ENCODE measurements at regions of chr1 and their contacts with region 1.

Region 1: DNA sequence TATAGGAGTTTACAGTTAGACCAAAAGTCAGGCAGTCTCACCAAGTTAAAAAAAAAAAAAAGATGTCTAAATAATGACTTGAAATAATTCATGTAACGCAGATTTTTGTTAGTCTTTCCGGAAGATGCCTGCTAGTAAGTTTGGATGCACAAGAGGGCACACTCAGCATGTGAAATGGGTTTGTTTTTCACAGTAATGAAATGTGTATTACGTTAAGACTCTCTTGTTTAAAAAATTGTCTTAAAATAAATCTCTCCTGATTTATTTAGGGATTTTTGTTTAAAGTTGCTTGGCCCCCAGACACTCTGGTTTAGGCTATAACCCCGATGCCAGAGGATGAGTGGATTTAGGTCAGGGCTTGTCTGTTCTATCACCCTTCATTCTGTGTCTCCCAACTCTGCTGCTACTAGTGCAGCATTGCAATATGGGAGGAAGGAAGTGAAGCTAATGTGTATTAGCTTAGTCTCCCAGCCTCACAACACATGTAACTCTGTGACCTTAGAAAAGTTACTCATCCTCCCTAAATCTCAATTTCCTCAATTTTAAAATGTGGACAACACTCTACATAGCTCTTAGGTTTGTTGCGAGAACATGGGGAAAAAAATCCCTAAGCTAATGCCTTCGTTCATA is 25.7 kb downstream of the CTH start:
- DNase-seq: peak; percentile 17
- H3K4me3 ChIP-seq: no peak overlapping the region
- H3K27me3 ChIP-seq: no peaks in the 10 kb centered on the region
- CTCF ChIP-seq: peak; percentile 62

Region 2: GRCh38 chr1:70486676-70487458 is 50.1 kb after region 1 on chr1:
- CTCF ChIA-PET with region 1: interaction called, 10 read pairs
- POLR2A ChIA-PET with region 1: no interaction called
- DNase-seq: peak; percentile 80
- H3K4me3 ChIP-seq: no peak overlapping the region
- H3K27me3 ChIP-seq: no peaks in the 10 kb centered on the region
- CTCF ChIP-seq: no peak

Region 3: DNA sequence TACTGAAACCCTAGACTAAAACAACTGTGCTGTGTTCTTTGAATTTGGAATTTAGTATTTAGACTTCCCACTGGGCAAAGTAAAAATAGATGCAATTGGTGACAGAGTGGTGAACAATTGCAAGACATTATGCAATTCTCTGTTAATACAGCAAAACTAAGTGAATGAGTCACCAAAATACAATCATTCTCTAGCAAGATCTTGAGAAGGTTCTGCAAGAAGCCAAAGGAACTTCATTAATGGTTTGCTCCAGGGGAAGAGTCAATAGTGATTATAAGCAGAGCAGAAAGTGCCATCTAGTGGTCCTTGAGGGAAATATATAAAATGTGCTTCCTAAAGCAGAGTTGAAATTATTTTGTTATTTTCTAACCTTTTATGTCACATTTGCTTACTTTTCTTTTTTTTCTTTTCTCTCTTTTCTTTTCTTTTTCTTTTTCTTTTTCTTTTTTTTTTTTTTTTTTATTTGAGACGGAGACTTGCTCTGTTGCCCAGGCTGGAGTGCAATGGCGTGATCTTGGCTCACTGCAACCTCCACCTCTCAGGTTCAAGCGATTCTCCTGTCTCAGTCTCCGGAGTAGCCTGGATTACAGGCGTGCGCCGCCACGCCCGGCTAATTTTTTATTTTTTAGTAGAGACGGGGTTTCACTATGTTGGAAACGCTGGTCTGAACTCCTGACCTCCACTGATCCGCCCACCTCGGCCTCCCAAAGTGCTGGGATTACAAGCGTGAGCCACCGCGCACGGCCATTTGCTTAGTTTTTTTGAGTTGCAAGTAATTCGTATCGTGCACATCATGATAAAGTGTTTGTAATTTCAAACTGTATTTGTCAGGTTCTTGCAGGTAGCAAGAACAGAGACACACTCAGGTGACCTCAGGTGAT is 73.5 kb after region 1 on chr1:
- CTCF ChIA-PET with region 1: interaction called, 12 read pairs
- POLR2A ChIA-PET with region 1: no interaction called
- DNase-seq: peak; percentile 95
- H3K4me3 ChIP-seq: no peak overlapping the region
- H3K27me3 ChIP-seq: no peaks in the 10 kb centered on the region
- CTCF ChIP-seq: peak; percentile 65

Region 4: GRCh38 chr1:70571191-70571590 is 134.5 kb after region 1 on chr1:
- CTCF ChIA-PET with region 1: no interaction called
- POLR2A ChIA-PET with region 1: no interaction called
- DNase-seq: no peak
- H3K4me3 ChIP-seq: no peak overlapping the region
- H3K27me3 ChIP-seq: no peaks in the 10 kb centered on the region
- CTCF ChIP-seq: no peak

Measured in BJ (cell line).